Naive thymus-derived CD4-positive, alpha-beta T cell (primary cell): ENCODE measurements at regions of chr7 and their contacts with region 1.

Region 1: DNA sequence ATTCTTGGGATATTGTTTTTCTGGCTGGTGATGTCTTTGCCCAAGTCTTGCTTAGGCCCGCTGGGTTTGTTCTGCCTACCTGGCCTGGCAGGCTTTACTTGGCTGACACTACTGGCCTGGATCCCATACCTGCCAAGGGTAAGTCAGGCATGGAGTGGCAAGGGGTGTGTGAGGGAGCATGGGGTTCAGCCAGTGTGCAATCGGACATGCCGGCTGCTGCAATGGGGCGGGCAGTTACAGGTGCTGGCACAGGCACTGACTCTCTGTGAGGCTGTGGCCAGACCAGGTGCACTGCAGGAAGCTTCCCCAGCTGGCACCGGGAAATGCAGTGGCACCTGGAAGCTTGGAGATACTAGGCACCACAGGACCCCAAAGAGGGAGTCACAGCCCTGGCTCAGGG is 168.4 kb downstream of the PON1 start:
- DNase-seq: no peak
- ATAC-seq: no peak
- H3K4me3 ChIP-seq: no peak overlapping the region
- H3K4me3 Mint-ChIP-seq: no peak overlapping the region
- H3K27ac ChIP-seq: no peak overlapping the region
- H3K27ac Mint-ChIP-seq: no peak overlapping the region
- H3K4me1 ChIP-seq: no peaks in the 10 kb centered on the region
- H3K4me1 Mint-ChIP-seq: no peaks in the 10 kb centered on the region
- H3K27me3 ChIP-seq: no peaks in the 10 kb centered on the region
- H3K27me3 Mint-ChIP-seq: peaks cover 0 to 3% (median 0%) of the 10 kb centered on the region in 5 donors

Region 2: DNA sequence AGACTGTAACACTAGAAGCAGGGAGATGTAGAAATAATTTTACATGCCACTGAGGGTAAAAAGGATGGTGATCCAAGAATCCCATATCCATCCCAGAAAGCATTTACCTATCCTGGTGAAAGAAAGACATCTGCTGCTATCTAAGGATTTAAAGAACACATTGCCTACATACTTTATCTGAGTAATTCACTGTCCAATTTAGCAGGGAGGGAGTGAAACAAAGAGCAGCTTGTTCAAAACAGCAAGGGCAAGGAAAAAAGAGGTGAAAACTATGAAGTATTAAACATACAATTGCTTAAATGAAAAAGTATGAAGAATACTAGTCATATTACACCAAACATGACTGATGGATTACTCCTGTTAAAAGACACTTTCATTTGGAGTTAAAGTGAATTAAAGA is 42.4 kb before region 1 on chr7:
- CTCF ChIA-PET with region 1: no interaction called
- POLR2A ChIA-PET with region 1: no interaction called
- intact Hi-C with region 1: loop called in 1 of 2 experiments (anchors 1 kb)
- DNase-seq: no peak
- ATAC-seq: no peak
- H3K4me3 ChIP-seq: no peak overlapping the region
- H3K4me3 Mint-ChIP-seq: no peak overlapping the region
- H3K27ac ChIP-seq: no peak overlapping the region
- H3K27ac Mint-ChIP-seq: no peak overlapping the region
- H3K4me1 ChIP-seq: no peaks in the 10 kb centered on the region
- H3K4me1 Mint-ChIP-seq: peaks cover 0 to 3% (median 0%) of the 10 kb centered on the region in 7 donors
- H3K27me3 ChIP-seq: no peaks in the 10 kb centered on the region
- H3K27me3 Mint-ChIP-seq: peaks cover 0 to 9% (median 4%) of the 10 kb centered on the region in 5 donors